ENCODE measurements at regions of chr7 and their contacts with region 1.

Region 1: GRCh38 chr7:114539575-114539974 is 125.0 kb downstream of the FOXP2 start:
- DNase-seq: no peak
- H3K4me3 ChIP-seq: no peak overlapping the region
- H3K27ac ChIP-seq: no peak overlapping the region
- H3K4me1 ChIP-seq: no peaks in the 10 kb centered on the region
- H3K27me3 ChIP-seq: no peaks in the 10 kb centered on the region
- CTCF ChIP-seq: peak; percentile 15 to 46

Region 2: GRCh38 chr7:114426382-114427223 is 113.0 kb before region 1 on chr7:
- CTCF ChIA-PET with region 1: interaction called, 14 read pairs
- dilution Hi-C with region 1: no loop called
- in situ Hi-C with region 1: no loop called
- intact Hi-C with region 1: no loop called
- DNase-seq: no peak
- H3K4me3 ChIP-seq: no peak overlapping the region
- H3K27ac ChIP-seq: no peak overlapping the region
- H3K4me1 ChIP-seq: no peaks in the 10 kb centered on the region
- H3K27me3 ChIP-seq: peaks cover 2% of the 10 kb centered on the region
- CTCF ChIP-seq: peak; percentile 17 to 42

Region 3: GRCh38 chr7:114598946-114599345 is 59.4 kb after region 1 on chr7:
- CTCF ChIA-PET with region 1: no interaction called
- dilution Hi-C with region 1: no loop called
- in situ Hi-C with region 1: no loop called
- intact Hi-C with region 1: no loop called
- DNase-seq: no peak
- H3K4me3 ChIP-seq: no peak overlapping the region
- H3K27ac ChIP-seq: no peak overlapping the region
- H3K4me1 ChIP-seq: no peaks in the 10 kb centered on the region
- H3K27me3 ChIP-seq: no peaks in the 10 kb centered on the region
- CTCF ChIP-seq: no peak

Region 4: GRCh38 chr7:115145512-115145911 is 605.9 kb after region 1 on chr7:
- CTCF ChIA-PET with region 1: no interaction called
- dilution Hi-C with region 1: no loop called
- in situ Hi-C with region 1: no loop called
- intact Hi-C with region 1: no loop called
- DNase-seq: peak; percentile 1
- H3K4me3 ChIP-seq: no peak overlapping the region
- H3K27ac ChIP-seq: no peak overlapping the region
- H3K4me1 ChIP-seq: peaks cover 10% of the 10 kb centered on the region
- H3K27me3 ChIP-seq: no peaks in the 10 kb centered on the region
- CTCF ChIP-seq: no peak

Region 5: DNA sequence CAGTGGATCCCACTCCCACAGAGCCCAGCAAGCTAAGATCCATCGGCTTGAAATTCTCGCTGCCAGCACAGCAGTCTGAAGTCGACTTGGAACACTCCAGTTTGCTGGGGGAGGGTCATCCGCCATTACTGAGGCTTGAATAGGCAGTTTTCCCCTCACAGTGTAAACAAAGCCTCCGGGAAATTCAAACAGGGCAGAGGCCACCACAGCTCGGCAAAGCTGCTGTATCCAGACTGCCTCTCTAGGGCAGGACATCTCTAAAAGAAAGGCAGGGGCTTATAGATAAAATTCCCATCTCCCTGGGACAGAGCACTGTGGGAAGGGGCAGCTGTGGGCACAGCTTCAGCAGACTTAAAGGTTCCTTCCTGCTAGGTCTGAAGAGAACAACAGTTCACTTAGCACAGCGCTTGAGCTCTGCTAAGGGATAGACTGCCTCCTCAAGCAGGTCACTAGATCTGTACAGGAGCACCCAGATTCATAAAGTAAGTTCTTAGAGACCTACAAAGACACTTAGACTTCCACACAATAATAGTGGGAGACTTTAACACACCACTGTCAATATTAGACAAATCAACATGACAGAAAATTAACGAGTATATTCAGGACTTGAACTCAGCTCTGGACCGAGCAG is 1349.9 kb after region 1 on chr7:
- CTCF ChIA-PET with region 1: no interaction called
- dilution Hi-C with region 1: no loop called
- in situ Hi-C with region 1: no loop called
- intact Hi-C with region 1: no loop called
- DNase-seq: no peak
- H3K4me3 ChIP-seq: no peak overlapping the region
- H3K27ac ChIP-seq: no peak overlapping the region
- H3K4me1 ChIP-seq: no peaks in the 10 kb centered on the region
- H3K27me3 ChIP-seq: no peaks in the 10 kb centered on the region
- CTCF ChIP-seq: no peak

Measured in mammary epithelial cell (primary cell).